B cell (primary cell): ENCODE measurements at regions of chr17 and their contacts with region 1.

Region 1: DNA sequence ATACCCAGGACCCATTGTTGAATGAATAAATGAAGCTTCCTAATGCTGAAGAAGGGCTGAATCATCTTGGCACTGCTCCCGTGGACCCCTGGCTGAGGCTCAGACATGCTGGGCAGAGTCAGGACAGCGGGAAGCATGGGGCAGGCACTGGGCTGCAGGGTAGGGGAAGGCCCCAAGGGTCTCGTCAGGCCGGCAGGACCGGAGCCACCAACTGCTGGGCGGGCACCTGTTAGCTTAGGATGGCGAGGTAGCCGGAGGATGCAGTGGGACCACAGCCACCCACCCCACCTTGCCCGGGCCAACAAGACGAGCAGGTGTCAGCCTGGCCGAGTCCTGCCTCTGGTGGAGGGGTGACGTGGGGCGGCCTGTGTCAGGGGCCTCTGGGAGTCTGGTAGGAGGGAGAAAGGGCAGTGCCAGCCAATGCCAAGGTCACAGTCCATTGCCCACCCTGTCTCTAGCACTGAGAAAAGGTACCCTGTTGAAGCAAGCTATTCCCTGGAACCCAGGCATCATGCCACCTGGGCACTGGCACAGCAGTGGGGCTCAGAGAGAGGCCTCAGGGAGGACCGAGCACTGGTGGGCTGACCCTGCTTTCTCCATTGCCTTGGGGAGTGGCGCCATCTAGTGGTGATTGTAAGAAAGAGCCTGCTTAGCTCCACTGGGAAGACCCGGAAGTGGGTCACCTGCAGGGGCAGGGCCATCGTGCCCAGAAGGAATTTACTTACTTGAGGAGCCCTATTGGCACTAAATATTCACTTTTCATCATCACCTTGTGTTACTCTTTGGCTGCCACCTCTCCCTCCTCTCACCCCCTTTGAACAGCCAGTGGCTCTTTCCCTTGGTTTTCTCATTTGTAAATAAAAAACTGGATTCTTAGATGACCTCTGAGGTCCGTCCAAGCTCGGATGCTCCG is 3.0 kb upstream of the DLX3 start:
- DNase-seq: peak; percentile 89
- ATAC-seq: peak; percentile 78
- H3K4me3 ChIP-seq: no peak overlapping the region
- H3K4me3 Mint-ChIP-seq: no peak overlapping the region
- H3K27ac ChIP-seq: no peak overlapping the region
- H3K27ac Mint-ChIP-seq: no peak overlapping the region
- H3K4me1 ChIP-seq: peaks cover 42 to 45% of the 10 kb centered on the region in 2 donors
- H3K4me1 Mint-ChIP-seq: peaks cover 38% of the 10 kb centered on the region
- H3K27me3 ChIP-seq: peaks cover 0 to 74% (median 52%) of the 10 kb centered on the region in 4 experiments
- H3K27me3 Mint-ChIP-seq: peaks cover 75% of the 10 kb centered on the region
- CTCF ChIP-seq: peak; percentile 92

Region 2: DNA sequence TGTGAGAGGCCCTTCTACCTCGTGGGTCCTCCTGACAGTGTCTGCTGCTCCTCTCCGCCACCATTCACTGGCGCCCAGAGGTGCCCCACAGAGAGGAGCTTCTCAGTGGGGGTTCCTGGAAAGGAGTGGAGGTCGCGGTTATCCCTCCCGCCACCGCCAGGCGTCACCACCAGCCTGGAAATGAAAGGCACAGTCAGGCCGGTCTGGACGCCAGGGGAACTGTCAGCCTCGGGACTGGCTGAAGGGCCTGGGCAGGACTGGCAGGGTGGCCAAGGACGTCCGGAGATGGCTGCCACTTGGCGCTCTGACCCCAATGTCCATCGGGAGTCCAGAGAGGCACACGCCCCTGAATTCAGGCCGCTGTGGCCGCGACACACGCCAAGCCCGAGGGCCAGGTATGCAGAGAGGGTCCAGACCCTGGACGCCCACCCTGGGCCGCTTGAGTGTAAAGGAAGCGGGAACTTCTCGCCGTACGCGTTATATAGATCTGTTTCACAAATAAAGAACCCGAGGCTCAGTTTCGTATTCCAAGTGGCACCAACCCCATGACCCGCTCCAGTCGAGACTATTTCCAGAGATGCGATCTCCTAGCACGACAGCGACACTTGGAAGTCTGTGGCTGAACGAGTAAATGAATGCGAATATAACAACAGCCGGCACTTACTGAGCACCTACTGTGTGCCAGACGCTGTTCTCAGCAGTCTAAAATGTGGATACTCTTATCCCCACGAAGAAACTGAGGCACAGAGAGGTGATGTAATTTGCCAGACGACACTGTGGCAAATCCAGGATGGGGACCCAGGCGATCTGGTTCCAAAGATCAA is 430.0 kb before region 1 on chr17:
- CTCF ChIA-PET with region 1: interaction called, 15 read pairs
- POLR2A ChIA-PET with region 1: no interaction called
- intact Hi-C with region 1: loop called (anchors 1 kb)
- DNase-seq: peak; percentile 88
- ATAC-seq: peak; percentile 66
- H3K4me3 ChIP-seq: peak overlapping the region in 3 of 5 experiments; percentile 20 to 39 (median 23)
- H3K4me3 Mint-ChIP-seq: peak overlapping the region; percentile 79
- H3K27ac ChIP-seq: no peak overlapping the region
- H3K27ac Mint-ChIP-seq: peak overlapping the region; percentile 32
- H3K4me1 ChIP-seq: peaks cover 6 to 17% of the 10 kb centered on the region in 2 donors
- H3K4me1 Mint-ChIP-seq: peaks cover 19% of the 10 kb centered on the region
- H3K27me3 ChIP-seq: peaks cover 0 to 42% (median 9%) of the 10 kb centered on the region in 4 experiments
- H3K27me3 Mint-ChIP-seq: peaks cover 36% of the 10 kb centered on the region
- CTCF ChIP-seq: peak; percentile 93

Region 3: GRCh38 chr17:49880291-49881053 is 117.6 kb before region 1 on chr17:
- CTCF ChIA-PET with region 1: interaction called, 45 read pairs
- POLR2A ChIA-PET with region 1: interaction called, 3 read pairs
- intact Hi-C with region 1: loop called (anchors 1 kb)
- DNase-seq: peak; percentile 78
- ATAC-seq: peak; percentile 95
- H3K4me3 ChIP-seq: peak overlapping the region in 2 of 5 experiments; percentile 9 to 16
- H3K4me3 Mint-ChIP-seq: peak overlapping the region; percentile 56
- H3K27ac ChIP-seq: no peak overlapping the region
- H3K27ac Mint-ChIP-seq: no peak overlapping the region
- H3K4me1 ChIP-seq: peaks cover 9 to 10% of the 10 kb centered on the region in 2 donors
- H3K4me1 Mint-ChIP-seq: peaks cover 6% of the 10 kb centered on the region
- H3K27me3 ChIP-seq: peaks cover 0 to 46% (median 18%) of the 10 kb centered on the region in 4 experiments
- H3K27me3 Mint-ChIP-seq: peaks cover 53% of the 10 kb centered on the region
- CTCF ChIP-seq: peak; percentile 97

Region 4: GRCh38 chr17:49959183-49959935 is 38.7 kb before region 1 on chr17:
- CTCF ChIA-PET with region 1: interaction called, 17 read pairs
- POLR2A ChIA-PET with region 1: interaction called, 5 read pairs
- intact Hi-C with region 1: no loop called
- DNase-seq: no peak
- ATAC-seq: no peak
- H3K4me3 ChIP-seq: no peak overlapping the region
- H3K4me3 Mint-ChIP-seq: no peak overlapping the region
- H3K27ac ChIP-seq: no peak overlapping the region
- H3K27ac Mint-ChIP-seq: no peak overlapping the region
- H3K4me1 ChIP-seq: peaks cover 13 to 18% of the 10 kb centered on the region in 2 donors
- H3K4me1 Mint-ChIP-seq: peaks cover 9% of the 10 kb centered on the region
- H3K27me3 ChIP-seq: peaks cover 0 to 33% (median 23%) of the 10 kb centered on the region in 4 experiments
- H3K27me3 Mint-ChIP-seq: peaks cover 39% of the 10 kb centered on the region
- CTCF ChIP-seq: no peak

Region 5: DNA sequence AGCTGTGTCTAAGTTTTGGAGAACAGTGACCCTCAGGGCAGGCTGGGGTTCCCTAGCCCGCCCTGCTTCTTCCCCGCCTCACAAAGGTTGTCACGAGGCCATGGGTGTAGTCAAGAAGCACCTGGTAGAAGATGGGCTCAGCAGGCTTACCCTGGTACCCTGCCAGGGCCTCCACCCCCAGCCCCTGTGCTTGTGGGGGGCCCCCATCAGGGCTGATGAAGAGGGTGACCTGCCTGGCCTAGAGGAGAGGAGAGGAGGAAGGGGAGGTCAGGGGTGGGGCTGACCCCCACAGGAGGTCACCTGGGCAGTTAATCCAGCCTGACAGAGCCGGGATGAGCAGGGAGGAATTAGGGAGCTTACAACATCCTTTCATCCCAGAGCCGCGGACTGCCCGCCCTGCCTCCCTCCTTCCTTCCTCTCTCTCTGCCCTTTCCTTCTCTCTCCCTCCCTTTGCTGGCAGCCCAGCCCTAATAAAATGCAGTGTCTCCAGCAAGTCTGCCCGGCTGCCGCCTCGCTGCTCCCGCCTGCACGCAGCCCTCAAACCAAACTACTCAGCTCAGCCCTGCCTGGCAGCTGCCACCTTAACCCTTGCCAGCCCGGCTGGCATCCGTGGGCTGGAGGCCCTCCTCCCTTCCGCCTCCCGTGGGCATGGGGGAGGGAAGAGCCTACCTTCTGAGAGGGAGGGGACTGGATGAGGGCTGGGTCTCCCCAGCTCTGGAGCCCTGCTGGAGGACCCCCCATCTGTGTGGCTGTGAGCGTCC is 10.2 kb before region 1 on chr17:
- CTCF ChIA-PET with region 1: interaction called, 41 read pairs
- POLR2A ChIA-PET with region 1: no interaction called
- intact Hi-C with region 1: no loop called
- DNase-seq: no peak
- ATAC-seq: no peak
- H3K4me3 ChIP-seq: no peak overlapping the region
- H3K4me3 Mint-ChIP-seq: no peak overlapping the region
- H3K27ac ChIP-seq: no peak overlapping the region
- H3K27ac Mint-ChIP-seq: no peak overlapping the region
- H3K4me1 ChIP-seq: peaks cover 0 to under 1% of the 10 kb centered on the region in 2 donors
- H3K4me1 Mint-ChIP-seq: peaks cover 4% of the 10 kb centered on the region
- H3K27me3 ChIP-seq: peaks cover 0 to 80% (median 20%) of the 10 kb centered on the region in 4 experiments
- H3K27me3 Mint-ChIP-seq: peaks cover 68% of the 10 kb centered on the region
- CTCF ChIP-seq: no peak

Region 6: DNA sequence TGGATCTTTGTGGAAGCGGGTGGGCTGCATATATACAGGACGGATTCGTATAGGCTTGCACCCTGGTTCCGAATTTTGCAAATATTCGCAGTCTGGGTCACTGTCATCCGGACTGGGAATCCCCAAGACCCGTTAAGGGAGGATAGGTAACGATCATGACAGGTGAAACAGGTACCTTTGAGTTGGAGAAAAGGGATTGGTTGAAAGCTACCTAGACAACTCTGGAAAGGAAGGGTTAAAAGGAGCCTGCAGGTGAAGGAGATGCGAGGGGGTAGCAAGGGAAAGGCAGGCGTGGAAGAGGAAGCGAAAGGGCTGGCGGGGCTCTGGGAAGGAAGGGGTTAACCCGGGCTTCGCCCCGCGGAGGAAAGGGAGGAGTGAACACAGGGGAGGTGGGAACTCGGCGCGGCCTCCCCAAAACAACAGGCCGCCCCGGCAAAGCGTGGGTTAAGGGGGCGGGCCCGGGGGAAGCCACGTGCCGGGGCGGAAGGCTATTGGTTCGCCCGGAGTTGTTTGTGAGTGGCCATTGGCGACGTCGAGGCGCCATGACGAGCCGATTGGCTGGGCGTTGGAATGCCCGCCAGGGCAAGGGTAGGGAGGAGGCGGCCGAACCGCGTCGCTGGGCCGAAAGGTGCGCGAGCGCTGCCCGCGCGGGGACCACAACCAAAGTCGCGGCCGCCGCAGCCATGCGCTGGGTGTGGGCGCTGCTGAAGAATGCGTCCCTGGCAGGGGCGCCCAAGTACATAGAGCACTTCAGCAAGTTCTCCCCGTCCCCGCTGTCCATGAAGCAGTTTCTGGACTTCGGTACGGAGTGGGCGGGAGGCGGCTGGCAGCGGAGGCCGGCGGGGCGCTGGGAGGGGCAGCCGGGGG is 96.9 kb after region 1 on chr17 and contains the start of gene PDK2:
- CTCF ChIA-PET with region 1: interaction called, 14 read pairs
- POLR2A ChIA-PET with region 1: no interaction called
- intact Hi-C with region 1: no loop called
- DNase-seq: peak; percentile 98
- ATAC-seq: peak; percentile 93
- H3K4me3 ChIP-seq: peak within 1 kb of the TSS; percentile 61 to 95 (median 89)
- H3K4me3 Mint-ChIP-seq: peak within 1 kb of the TSS; percentile 99
- H3K27ac ChIP-seq: peak within 1 kb of the TSS; percentile 3 to 77
- H3K27ac Mint-ChIP-seq: peak within 1 kb of the TSS; percentile 94
- H3K4me1 ChIP-seq: peaks cover 8 to 20% of the 10 kb centered on the region in 2 donors
- H3K4me1 Mint-ChIP-seq: peaks cover 27% of the 10 kb centered on the region
- H3K27me3 ChIP-seq: peaks cover 0 to 3% (median 0%) of the 10 kb centered on the region in 4 experiments
- H3K27me3 Mint-ChIP-seq: no peaks in the 10 kb centered on the region
- CTCF ChIP-seq: no peak
- total RNA-seq, gene PDK2: 35.2 and 36.7 TPM in 2 replicates